Activated CD4-positive, alpha-beta T cell treated with anti-CD3 and anti-CD28 coated beads, Interleukin-2, amount 10 ng/mL, durations not matched to agents 24 days and 14 days (primary cell): ENCODE measurements at regions of chr6 and their contacts with region 1.

Region 1: GRCh38 chr6:7589949-7590917 is at the start of gene SNRNP48:
- DNase-seq: peak; percentile 98
- H3K4me3 Mint-ChIP-seq: peak within 1 kb of the TSS; percentile 100
- H3K27ac Mint-ChIP-seq: peak within 1 kb of the TSS; percentile 96
- H3K4me1 Mint-ChIP-seq: peaks cover 30% of the 10 kb centered on the region
- H3K27me3 Mint-ChIP-seq: peaks cover 7% of the 10 kb centered on the region
- total RNA-seq, gene SNRNP48: 18.4 and 19.6 TPM in 2 replicates

Region 2: DNA sequence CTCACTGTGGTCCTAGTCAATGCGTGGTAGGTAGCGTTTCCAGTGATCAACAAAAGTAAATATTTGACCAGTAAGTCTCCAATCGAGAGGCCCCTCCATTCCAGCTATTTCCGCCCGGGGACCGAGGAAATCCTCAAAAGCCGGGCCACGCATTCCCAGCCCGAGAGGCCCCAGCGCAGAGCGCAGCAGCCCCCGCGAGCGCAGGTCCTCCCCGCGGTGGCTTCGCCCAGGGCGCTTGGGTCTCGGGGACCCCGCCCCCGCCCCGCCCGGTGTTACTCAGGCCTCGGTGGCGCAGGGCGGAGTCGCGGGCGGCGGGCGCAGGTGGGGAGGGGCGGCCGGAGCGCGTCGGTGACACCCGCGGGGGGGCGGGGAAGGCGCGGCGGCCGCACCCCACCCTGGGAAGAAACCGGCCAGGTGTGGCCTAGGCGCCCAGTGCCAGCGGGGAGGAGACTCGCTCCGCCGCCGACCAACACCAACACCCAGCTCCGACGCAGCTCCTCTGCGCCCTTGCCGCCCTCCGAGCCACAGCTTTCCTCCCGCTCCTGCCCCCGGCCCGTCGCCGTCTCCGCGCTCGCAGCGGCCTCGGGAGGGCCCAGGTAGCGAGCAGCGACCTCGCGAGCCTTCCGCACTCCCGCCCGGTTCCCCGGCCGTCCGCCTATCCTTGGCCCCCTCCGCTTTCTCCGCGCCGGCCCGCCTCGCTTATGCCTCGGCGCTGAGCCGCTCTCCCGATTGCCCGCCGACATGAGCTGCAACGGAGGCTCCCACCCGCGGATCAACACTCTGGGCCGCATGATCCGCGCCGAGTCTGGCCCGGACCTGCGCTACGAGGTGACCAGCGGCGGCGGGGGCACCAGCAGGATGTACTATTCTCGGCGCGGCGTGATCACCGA is 48.8 kb before region 1 on chr6 and contains the start of gene DSP:
- intact Hi-C with region 1: loop called (anchors 5 kb)
- DNase-seq: peak; percentile 75
- H3K4me3 Mint-ChIP-seq: peak within 1 kb of the TSS; percentile 86
- H3K27ac Mint-ChIP-seq: no peak within 1 kb of the TSS
- H3K4me1 Mint-ChIP-seq: peaks cover 11% of the 10 kb centered on the region
- H3K27me3 Mint-ChIP-seq: peaks cover 77% of the 10 kb centered on the region
- total RNA-seq, gene DSP: 0.02 TPM in 1 of 2 replicates, not detected in the other

Region 3: DNA sequence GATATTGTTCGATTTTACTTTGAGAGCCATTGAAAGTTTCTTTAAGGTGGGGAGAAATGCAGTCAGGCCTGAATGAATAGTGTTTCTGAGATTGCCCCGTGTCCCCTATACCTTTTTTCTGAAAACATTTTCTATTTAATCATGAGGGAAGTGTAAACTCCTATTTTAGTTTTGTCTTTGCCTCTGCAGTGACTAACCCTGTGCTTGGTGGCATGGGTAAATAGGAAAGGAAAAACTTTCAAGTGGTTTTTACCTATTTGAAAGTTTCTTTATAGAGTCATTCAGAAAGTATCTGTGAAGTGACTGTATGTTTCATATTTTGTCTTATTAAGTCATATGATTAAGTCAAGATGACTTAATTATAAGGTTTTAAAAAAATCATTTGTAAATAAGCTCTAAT is 14.3 kb after region 1 on chr6:
- intact Hi-C with region 1: loop called (anchors 1 kb)
- DNase-seq: peak; percentile 52
- H3K4me3 Mint-ChIP-seq: no peak overlapping the region
- H3K27ac Mint-ChIP-seq: no peak overlapping the region
- H3K4me1 Mint-ChIP-seq: peaks cover 18% of the 10 kb centered on the region
- H3K27me3 Mint-ChIP-seq: no peaks in the 10 kb centered on the region

Region 4: GRCh38 chr6:8102122-8102958 is 512.1 kb after region 1 on chr6 and contains the start of gene EEF1E1:
- intact Hi-C with region 1: loop called (anchors 5 kb)
- DNase-seq: peak; percentile 97
- H3K4me3 Mint-ChIP-seq: peak within 1 kb of the TSS; percentile 95
- H3K27ac Mint-ChIP-seq: peak within 1 kb of the TSS; percentile 99
- H3K4me1 Mint-ChIP-seq: peaks cover 24% of the 10 kb centered on the region
- H3K27me3 Mint-ChIP-seq: peaks cover 15% of the 10 kb centered on the region
- total RNA-seq, gene EEF1E1: 93.6 and 95.9 TPM in 2 replicates